A673 (cell line): ENCODE measurements at regions of chr10 and their contacts with region 1.

Region 1: DNA sequence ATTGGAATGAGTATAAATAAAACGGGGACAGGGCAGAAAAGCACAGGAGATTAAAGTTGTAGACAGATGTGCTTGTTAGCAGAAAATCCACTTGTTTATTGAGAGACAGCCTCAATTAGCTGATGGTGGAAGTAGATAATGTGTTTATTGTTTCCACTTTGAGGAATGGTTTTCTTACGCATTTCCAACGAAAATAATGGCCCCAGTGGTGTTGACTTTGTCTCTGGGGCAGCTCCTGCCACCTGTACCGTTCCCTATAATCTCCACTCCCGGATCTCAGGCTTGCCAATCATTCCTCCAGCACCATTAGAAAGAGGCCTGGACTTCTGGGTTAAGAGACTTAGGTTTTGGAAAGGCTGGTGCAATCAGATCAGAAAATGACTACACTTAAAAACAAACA is 638.7 kb downstream of the PARD3 start:
- DNase-seq: no peak
- H3K4me3 ChIP-seq: no peak overlapping the region
- H3K27ac ChIP-seq: no peak overlapping the region
- H3K4me1 ChIP-seq: peaks cover 20% of the 10 kb centered on the region
- H3K27me3 ChIP-seq: no peaks in the 10 kb centered on the region
- CTCF ChIP-seq: no peak

Region 2: GRCh38 chr10:34193931-34194626 is 17.7 kb after region 1 on chr10:
- CTCF ChIA-PET with region 1: no interaction called
- POLR2A ChIA-PET with region 1: interaction called, 15 read pairs
- intact Hi-C with region 1: no loop called
- DNase-seq: no peak
- H3K4me3 ChIP-seq: no peak overlapping the region
- H3K27ac ChIP-seq: no peak overlapping the region
- H3K4me1 ChIP-seq: peaks cover 45% of the 10 kb centered on the region
- H3K27me3 ChIP-seq: no peaks in the 10 kb centered on the region
- CTCF ChIP-seq: no peak